Heart left ventricle (tissue), 16 donors: ENCODE measurements at regions of chr3 and their contacts with region 1.

Region 1: GRCh38 chr3:15578289-15578867 is 23.0 kb downstream of the HACL1 start:
- DNase-seq: no peak
- ATAC-seq: no peak
- H3K4me3 ChIP-seq: no peak overlapping the region
- H3K27ac ChIP-seq: no peak overlapping the region
- H3K4me1 ChIP-seq: peaks cover 0 to 10% (median 0%) of the 10 kb centered on the region in 12 donors
- H3K27me3 ChIP-seq: no peaks in the 10 kb centered on the region
- CTCF ChIP-seq: no peak
- POLR2A ChIP-seq: no peak

Region 2: GRCh38 chr3:15098503-15099363 is 479.6 kb before region 1 on chr3 and contains the start of gene RBSN:
- intact Hi-C with region 1: no loop called
- DNase-seq: peak; percentile 94 to 98 (median 97)
- ATAC-seq: peak; percentile 38 to 79 (median 76)
- H3K4me3 ChIP-seq: peak within 1 kb of the TSS; percentile 75 to 93 (median 82)
- H3K27ac ChIP-seq: peak within 1 kb of the TSS; percentile 54 to 94 (median 87)
- H3K4me1 ChIP-seq: peaks cover 3 to 46% (median 18%) of the 10 kb centered on the region in 12 donors
- H3K27me3 ChIP-seq: no peaks in the 10 kb centered on the region
- CTCF ChIP-seq: no peak
- POLR2A ChIP-seq: peak in 1 of 2 donors; percentile 89
- total RNA-seq, gene RBSN: 17.9 to 24.1 (median 21.6) TPM

Region 3: DNA sequence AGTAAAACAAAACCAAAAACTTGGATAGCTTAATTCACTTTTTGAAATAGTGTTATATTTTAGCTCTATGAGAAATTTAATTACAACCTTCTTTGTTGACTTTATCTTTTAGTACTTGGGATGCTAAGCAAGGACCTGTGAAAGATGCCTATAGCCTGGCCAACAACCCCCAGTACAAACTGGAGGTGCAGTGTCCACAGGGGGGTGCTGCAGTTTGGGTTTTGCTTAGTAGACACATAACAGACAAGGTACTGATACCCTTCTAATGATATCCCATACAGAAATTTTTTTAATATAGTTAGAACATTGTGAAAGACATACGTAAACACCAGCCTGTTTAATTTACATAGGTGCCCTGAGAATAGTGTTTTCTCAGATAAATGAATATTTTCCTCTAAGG is 337.0 kb before region 1 on chr3:
- intact Hi-C with region 1: loop called in 1 of 10 experiments (anchors 10 kb)
- DNase-seq: no peak
- ATAC-seq: peak in 1 of 4 donors; percentile 44
- H3K4me3 ChIP-seq: no peak overlapping the region
- H3K27ac ChIP-seq: no peak overlapping the region
- H3K4me1 ChIP-seq: no peaks in the 10 kb centered on the region
- H3K27me3 ChIP-seq: no peaks in the 10 kb centered on the region
- CTCF ChIP-seq: peak in 5 of 12 donors; percentile 9 to 38 (median 26)
- POLR2A ChIP-seq: no peak

Region 4: GRCh38 chr3:15332405-15333098 is 245.8 kb before region 1 on chr3 and contains the start of gene SH3BP5:
- intact Hi-C with region 1: no loop called
- DNase-seq: peak; percentile 79 to 87 (median 83)
- ATAC-seq: peak; percentile 57 to 94 (median 89)
- H3K4me3 ChIP-seq: peak within 1 kb of the TSS; percentile 64 to 96 (median 88)
- H3K27ac ChIP-seq: peak within 1 kb of the TSS; percentile 71 to 91 (median 82)
- H3K4me1 ChIP-seq: peaks cover 0 to 50% (median 30%) of the 10 kb centered on the region in 12 donors
- H3K27me3 ChIP-seq: no peaks in the 10 kb centered on the region
- CTCF ChIP-seq: peak; percentile 56 to 90 (median 82)
- POLR2A ChIP-seq: peak in 1 of 2 donors; percentile 69
- total RNA-seq, gene SH3BP5: 4.9 to 28.6 (median 11.7) TPM

Region 5: DNA sequence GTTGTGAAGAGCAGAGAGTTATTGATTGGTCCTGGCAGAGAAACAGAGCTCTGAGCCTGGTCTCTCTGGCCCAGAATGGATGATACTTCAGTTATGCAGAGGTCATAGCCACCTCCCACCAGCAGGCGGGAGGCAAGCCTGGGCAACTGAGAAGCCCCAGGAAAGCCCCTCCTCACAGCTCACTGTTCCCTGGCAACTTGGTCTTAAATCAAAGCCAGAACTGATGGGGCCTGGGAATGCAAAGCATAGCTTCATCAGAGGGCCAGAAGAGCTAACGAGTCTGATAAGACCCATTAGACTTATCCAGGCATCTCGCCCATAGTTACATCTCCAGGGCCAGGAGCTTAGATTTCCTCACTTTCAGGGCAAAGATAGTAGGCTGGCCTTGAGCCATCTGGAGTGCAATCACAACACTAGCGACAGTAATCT is 51.3 kb before region 1 on chr3:
- intact Hi-C with region 1: no loop called
- DNase-seq: no peak
- ATAC-seq: peak in 3 of 4 donors; percentile 16 to 70 (median 47)
- H3K4me3 ChIP-seq: no peak overlapping the region
- H3K27ac ChIP-seq: no peak overlapping the region
- H3K4me1 ChIP-seq: peaks cover 0 to 30% (median 13%) of the 10 kb centered on the region in 12 donors
- H3K27me3 ChIP-seq: no peaks in the 10 kb centered on the region
- CTCF ChIP-seq: peak in 6 of 12 donors; percentile 6 to 33 (median 14)
- POLR2A ChIP-seq: no peak

Region 6: DNA sequence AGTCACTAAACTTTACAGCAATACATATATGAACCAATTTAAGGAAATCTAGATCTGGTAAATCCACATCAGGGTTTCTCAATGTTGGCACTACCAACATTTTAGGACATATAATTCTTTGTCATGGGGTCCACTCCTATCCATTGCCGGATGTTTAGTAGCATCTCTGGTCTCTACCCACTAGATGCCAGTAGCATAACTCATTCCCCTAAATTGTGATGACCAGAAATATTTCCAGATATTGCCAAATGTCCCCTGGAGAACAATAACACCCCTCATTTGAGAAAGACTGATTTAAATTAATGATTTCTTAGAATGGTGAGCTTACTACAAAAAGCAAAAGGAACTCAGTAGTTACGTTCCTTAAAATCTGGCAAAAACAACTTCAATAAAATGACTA is 242.5 kb after region 1 on chr3:
- intact Hi-C with region 1: no loop called
- DNase-seq: no peak
- ATAC-seq: no peak
- H3K4me3 ChIP-seq: no peak overlapping the region
- H3K27ac ChIP-seq: no peak overlapping the region
- H3K4me1 ChIP-seq: peaks cover 0 to 21% (median 6%) of the 10 kb centered on the region in 12 donors
- H3K27me3 ChIP-seq: no peaks in the 10 kb centered on the region
- CTCF ChIP-seq: no peak
- POLR2A ChIP-seq: no peak